Sciatic nerve (tissue), 2 donors: ENCODE measurements at regions of chr2 and their contacts with region 1.

Region 1: DNA sequence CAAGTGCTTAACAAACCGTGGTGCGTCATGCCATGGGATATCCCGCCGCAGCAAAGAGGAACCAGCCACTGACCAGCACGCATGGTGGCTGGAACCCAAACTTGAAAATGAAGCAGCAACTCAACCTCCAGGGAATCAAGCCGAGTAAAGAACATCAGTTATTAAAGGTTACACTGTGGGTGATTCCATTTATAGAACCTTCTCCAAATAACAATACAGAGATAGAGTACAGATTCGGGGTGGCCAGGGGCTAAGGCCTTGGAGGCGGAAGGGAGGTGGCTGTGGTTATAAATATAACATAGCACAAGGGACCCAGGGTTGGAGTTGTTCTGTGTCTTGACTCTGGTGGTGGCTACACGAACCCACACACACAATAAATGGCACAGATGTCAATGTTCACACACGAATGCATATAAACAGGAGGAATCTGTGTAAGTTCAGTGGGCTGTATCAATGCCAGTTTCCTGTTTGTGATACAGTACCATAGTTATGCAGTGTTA is 123.1 kb downstream of the EIPR1 start:
- DNase-seq: no peak
- ATAC-seq: no peak

Region 2: GRCh38 chr2:2646433-2647051 is 608.0 kb before region 1 on chr2:
- intact Hi-C with region 1: loop called (anchors 5 kb)
- DNase-seq: no peak
- ATAC-seq: no peak